Posterior cingulate gyrus (tissue), 11 donors: ENCODE measurements at regions of chr16 and their contacts with region 1.

Region 1: GRCh38 chr16:50024684-50025536 is at the start of gene CNEP1R1:
- DNase-seq: peak; percentile 89 to 99 (median 92)

Region 2: DNA sequence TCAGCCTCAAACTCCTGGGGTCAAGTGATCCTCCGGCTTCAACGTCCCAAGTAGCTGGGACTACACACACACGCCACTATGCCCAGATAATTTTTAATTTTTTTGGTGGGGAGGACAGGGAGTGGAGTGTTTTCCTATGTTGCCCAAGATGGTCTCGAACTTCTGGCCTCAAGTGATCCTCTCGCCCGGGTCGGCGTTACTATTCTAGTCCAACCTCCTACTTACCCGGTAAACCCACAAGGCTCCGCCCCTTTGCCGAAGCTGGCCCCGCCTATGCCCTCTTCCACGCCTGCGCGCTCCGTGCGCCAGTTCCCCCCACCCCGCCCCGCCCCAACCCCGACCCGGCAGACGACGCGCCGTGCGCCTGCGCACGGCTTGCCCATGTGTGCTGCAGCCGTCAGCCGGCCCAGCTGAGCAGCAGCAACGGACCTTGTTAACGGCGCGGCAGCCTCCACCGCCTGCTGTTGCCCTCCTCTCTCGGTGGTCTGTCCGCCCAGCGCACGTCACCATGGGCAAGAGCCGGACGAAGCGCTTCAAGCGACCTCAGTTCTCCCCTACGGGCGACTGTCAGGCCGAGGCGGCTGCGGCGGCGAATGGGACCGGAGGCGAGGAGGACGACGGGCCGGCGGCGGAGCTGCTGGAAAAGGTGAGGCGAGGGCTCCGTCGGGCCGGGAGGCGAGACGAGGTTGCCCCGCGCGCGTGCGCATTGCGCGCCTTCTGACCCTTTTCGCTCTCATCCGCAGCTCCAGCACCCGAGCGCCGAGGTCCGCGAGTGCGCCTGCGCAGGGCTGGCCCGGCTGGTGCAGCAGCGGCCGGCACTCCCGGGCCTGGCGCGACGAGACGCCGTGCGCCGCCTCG is 40.9 kb after region 1 on chr16 and contains the start of gene HEATR3:
- intact Hi-C with region 1: loop called (anchors 2 kb)
- DNase-seq: peak; percentile 88 to 99 (median 92)